CD8-positive, alpha-beta T cell (primary cell): ENCODE measurements at regions of chr22 and their contacts with region 1.

Region 1: DNA sequence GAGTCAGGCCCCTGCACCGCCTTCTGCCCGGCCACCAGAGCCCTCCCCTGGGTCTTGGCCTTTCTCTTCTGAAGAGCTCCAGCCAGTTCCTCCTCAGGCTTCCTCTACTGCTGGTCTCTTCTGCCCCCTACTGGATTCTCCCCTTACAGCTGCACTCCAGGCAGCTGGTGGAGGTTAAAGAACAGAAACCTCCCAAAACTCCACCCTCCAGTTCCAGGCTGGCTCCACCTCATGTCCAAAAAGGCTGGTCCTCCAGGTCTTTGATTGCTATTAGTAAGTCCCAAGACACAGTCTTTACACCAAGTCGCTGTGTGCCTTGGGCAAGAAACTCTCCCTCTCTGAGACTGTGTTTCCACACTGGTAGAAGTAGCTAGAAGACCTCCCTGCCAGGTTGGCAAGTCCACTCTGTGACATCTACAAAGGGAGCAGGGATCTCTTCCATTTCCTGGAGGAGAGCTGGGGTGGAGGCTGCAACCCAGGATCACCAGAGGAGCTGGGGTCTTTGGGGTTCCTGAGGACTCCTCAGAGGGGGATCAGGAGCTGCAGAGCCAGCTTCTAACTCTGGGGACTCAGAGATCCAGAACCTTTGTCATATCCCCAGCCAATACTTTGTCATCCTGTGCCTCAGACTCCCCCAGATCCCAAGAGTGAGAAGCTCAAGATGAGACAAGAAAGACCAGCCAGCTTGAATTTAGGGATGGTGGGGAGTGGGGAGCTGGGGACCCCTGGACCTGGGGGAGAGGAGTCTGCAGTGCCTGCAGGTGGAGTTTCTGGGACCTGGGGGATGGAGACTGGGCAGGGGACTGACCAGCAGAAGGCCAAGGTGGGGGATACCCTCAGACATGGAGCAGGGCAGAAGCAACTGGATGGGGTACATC is 3.4 kb upstream of the IGLL5 start:
- DNase-seq: peak; percentile 46 to 86 (median 67)
- ATAC-seq: peak; percentile 78
- H3K4me3 ChIP-seq: no peak overlapping the region
- H3K4me3 Mint-ChIP-seq: no peak overlapping the region
- H3K27ac ChIP-seq: no peak overlapping the region
- H3K27ac Mint-ChIP-seq: no peak overlapping the region
- H3K4me1 ChIP-seq: no peaks in the 10 kb centered on the region
- H3K4me1 Mint-ChIP-seq: no peaks in the 10 kb centered on the region
- H3K27me3 ChIP-seq: no peaks in the 10 kb centered on the region
- H3K27me3 Mint-ChIP-seq: no peaks in the 10 kb centered on the region
- CTCF ChIP-seq: peak; percentile 93

Region 2: GRCh38 chr22:22408731-22409696 is 475.2 kb before region 1 on chr22:
- CTCF ChIA-PET with region 1: no interaction called
- POLR2A ChIA-PET with region 1: no interaction called
- intact Hi-C with region 1: no loop called
- DNase-seq: peak in 1 of 9 experiments; percentile 9
- ATAC-seq: no peak
- H3K4me3 ChIP-seq: no peak overlapping the region
- H3K4me3 Mint-ChIP-seq: no peak overlapping the region
- H3K27ac ChIP-seq: no peak overlapping the region
- H3K27ac Mint-ChIP-seq: no peak overlapping the region
- H3K4me1 ChIP-seq: no peaks in the 10 kb centered on the region
- H3K4me1 Mint-ChIP-seq: no peaks in the 10 kb centered on the region
- H3K27me3 ChIP-seq: no peaks in the 10 kb centered on the region
- H3K27me3 Mint-ChIP-seq: peaks cover 30% of the 10 kb centered on the region
- CTCF ChIP-seq: no peak

Region 3: GRCh38 chr22:22593964-22594656 is 290.1 kb before region 1 on chr22:
- CTCF ChIA-PET with region 1: interaction called, 8 read pairs
- POLR2A ChIA-PET with region 1: no interaction called
- intact Hi-C with region 1: loop called in 1 of 2 experiments (anchors 2 kb)
- DNase-seq: peak in 8 of 9 experiments; percentile 25 to 77 (median 48)
- ATAC-seq: peak; percentile 66
- H3K4me3 ChIP-seq: no peak overlapping the region
- H3K4me3 Mint-ChIP-seq: no peak overlapping the region
- H3K27ac ChIP-seq: no peak overlapping the region
- H3K27ac Mint-ChIP-seq: no peak overlapping the region
- H3K4me1 ChIP-seq: no peaks in the 10 kb centered on the region
- H3K4me1 Mint-ChIP-seq: peaks cover 4% of the 10 kb centered on the region
- H3K27me3 ChIP-seq: no peaks in the 10 kb centered on the region
- H3K27me3 Mint-ChIP-seq: peaks cover 7% of the 10 kb centered on the region
- CTCF ChIP-seq: peak; percentile 73

Region 4: GRCh38 chr22:22692707-22693530 is 191.3 kb before region 1 on chr22:
- CTCF ChIA-PET with region 1: interaction called, 50 read pairs
- POLR2A ChIA-PET with region 1: no interaction called
- intact Hi-C with region 1: loop called (anchors 1 to 5 kb)
- DNase-seq: peak; percentile 43 to 79 (median 70)
- ATAC-seq: peak; percentile 78
- H3K4me3 ChIP-seq: no peak overlapping the region
- H3K4me3 Mint-ChIP-seq: no peak overlapping the region
- H3K27ac ChIP-seq: no peak overlapping the region
- H3K27ac Mint-ChIP-seq: no peak overlapping the region
- H3K4me1 ChIP-seq: no peaks in the 10 kb centered on the region
- H3K4me1 Mint-ChIP-seq: no peaks in the 10 kb centered on the region
- H3K27me3 ChIP-seq: no peaks in the 10 kb centered on the region
- H3K27me3 Mint-ChIP-seq: no peaks in the 10 kb centered on the region
- CTCF ChIP-seq: peak; percentile 75

Region 5: DNA sequence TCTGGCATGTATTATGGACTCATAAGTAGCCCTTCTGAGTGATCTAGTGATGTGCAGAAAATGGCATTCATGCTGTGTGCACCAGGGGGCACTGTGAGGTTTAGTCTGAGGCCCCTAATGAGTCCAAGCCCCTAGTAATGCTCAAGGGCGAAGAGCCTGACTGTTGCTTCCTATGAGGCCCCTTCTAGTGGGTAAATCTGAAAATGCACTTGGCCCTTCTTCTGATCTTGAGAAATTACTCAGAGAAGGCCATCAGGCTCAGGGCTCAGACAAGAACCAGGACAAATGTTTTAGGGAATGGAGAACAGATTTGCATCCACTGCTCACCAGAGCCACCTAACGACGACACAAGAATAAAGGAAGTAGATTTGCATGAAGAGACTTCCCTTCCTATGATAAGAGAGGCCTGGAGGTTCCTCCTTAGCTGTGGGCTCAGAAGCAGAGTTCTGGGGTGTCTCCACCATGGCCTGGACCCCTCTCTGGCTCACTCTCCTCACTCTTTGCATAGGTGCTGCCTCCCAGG is 164.0 kb before region 1 on chr22:
- CTCF ChIA-PET with region 1: interaction called, 67 read pairs
- POLR2A ChIA-PET with region 1: no interaction called
- intact Hi-C with region 1: no loop called
- DNase-seq: peak in 6 of 9 experiments; percentile 33 to 83 (median 64)
- ATAC-seq: peak; percentile 68
- H3K4me3 ChIP-seq: no peak overlapping the region
- H3K4me3 Mint-ChIP-seq: no peak overlapping the region
- H3K27ac ChIP-seq: peak overlapping the region in 1 of 2 experiments; percentile 74
- H3K27ac Mint-ChIP-seq: peak overlapping the region; percentile 81
- H3K4me1 ChIP-seq: peaks cover 25% of the 10 kb centered on the region
- H3K4me1 Mint-ChIP-seq: peaks cover 30% of the 10 kb centered on the region
- H3K27me3 ChIP-seq: no peaks in the 10 kb centered on the region
- H3K27me3 Mint-ChIP-seq: no peaks in the 10 kb centered on the region
- CTCF ChIP-seq: peak; percentile 47

Region 6: DNA sequence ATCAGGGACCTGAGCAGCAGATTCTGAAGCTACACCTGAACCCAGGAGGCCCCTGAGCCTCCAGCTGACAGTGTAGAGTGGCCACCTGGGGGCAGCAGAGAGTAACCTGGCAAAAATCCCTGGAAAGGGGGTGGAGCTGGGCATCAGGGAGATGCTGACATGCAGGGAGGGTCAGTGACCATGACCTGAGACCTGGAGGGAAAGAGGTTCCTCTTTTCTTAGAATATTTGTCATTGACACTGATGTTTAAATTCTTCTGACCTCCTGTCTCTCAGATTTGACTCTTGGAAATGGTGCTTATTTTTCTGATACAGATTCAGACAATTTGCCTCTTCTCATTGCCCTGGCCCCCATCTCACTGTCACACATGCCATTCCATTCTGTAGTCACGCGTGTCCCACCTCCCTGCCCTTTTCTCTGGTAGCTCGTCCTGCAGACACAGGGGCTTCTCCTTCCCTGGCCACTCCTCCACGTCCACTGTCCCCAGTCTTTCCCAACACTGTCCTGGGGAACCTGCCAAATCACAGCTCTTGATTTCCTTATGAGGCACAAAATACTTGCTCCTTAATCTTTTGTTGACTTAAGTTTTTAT is 113.9 kb before region 1 on chr22:
- CTCF ChIA-PET with region 1: interaction called, 38 read pairs
- POLR2A ChIA-PET with region 1: interaction called, 5 read pairs
- intact Hi-C with region 1: no loop called
- DNase-seq: peak in 6 of 9 experiments; percentile 41 to 66 (median 59)
- ATAC-seq: peak; percentile 70
- H3K4me3 ChIP-seq: no peak overlapping the region
- H3K4me3 Mint-ChIP-seq: no peak overlapping the region
- H3K27ac ChIP-seq: peak overlapping the region in 1 of 2 experiments; percentile 60
- H3K27ac Mint-ChIP-seq: peak overlapping the region; percentile 73
- H3K4me1 ChIP-seq: no peaks in the 10 kb centered on the region
- H3K4me1 Mint-ChIP-seq: peaks cover 56% of the 10 kb centered on the region
- H3K27me3 ChIP-seq: no peaks in the 10 kb centered on the region
- H3K27me3 Mint-ChIP-seq: no peaks in the 10 kb centered on the region
- CTCF ChIP-seq: peak; percentile 74

Region 7: GRCh38 chr22:22810018-22810427 is 74.2 kb before region 1 on chr22:
- CTCF ChIA-PET with region 1: interaction called, 281 read pairs
- POLR2A ChIA-PET with region 1: interaction called, 5 read pairs
- intact Hi-C with region 1: loop called in 1 of 2 experiments (anchors 2 kb)
- DNase-seq: peak; percentile 57 to 89 (median 70)
- ATAC-seq: peak; percentile 84
- H3K4me3 ChIP-seq: no peak overlapping the region
- H3K4me3 Mint-ChIP-seq: peak overlapping the region; percentile 37
- H3K27ac ChIP-seq: peak overlapping the region in 1 of 2 experiments; percentile 55
- H3K27ac Mint-ChIP-seq: peak overlapping the region; percentile 49
- H3K4me1 ChIP-seq: peaks cover 21% of the 10 kb centered on the region
- H3K4me1 Mint-ChIP-seq: peaks cover 53% of the 10 kb centered on the region
- H3K27me3 ChIP-seq: no peaks in the 10 kb centered on the region
- H3K27me3 Mint-ChIP-seq: no peaks in the 10 kb centered on the region
- CTCF ChIP-seq: peak; percentile 64

Region 8: GRCh38 chr22:22897091-22897490 is 12.8 kb after region 1 on chr22:
- CTCF ChIA-PET with region 1: interaction called, 12 read pairs
- POLR2A ChIA-PET with region 1: no interaction called
- intact Hi-C with region 1: no loop called
- DNase-seq: no peak
- ATAC-seq: no peak
- H3K4me3 ChIP-seq: no peak overlapping the region
- H3K4me3 Mint-ChIP-seq: no peak overlapping the region
- H3K27ac ChIP-seq: no peak overlapping the region
- H3K27ac Mint-ChIP-seq: no peak overlapping the region
- H3K4me1 ChIP-seq: no peaks in the 10 kb centered on the region
- H3K4me1 Mint-ChIP-seq: no peaks in the 10 kb centered on the region
- H3K27me3 ChIP-seq: no peaks in the 10 kb centered on the region
- H3K27me3 Mint-ChIP-seq: peaks cover 4% of the 10 kb centered on the region
- CTCF ChIP-seq: no peak

Region 9: GRCh38 chr22:23036684-23037428 is 152.6 kb after region 1 on chr22:
- CTCF ChIA-PET with region 1: no interaction called
- POLR2A ChIA-PET with region 1: no interaction called
- intact Hi-C with region 1: no loop called
- DNase-seq: no peak
- ATAC-seq: no peak
- H3K4me3 ChIP-seq: no peak overlapping the region
- H3K4me3 Mint-ChIP-seq: no peak overlapping the region
- H3K27ac ChIP-seq: no peak overlapping the region
- H3K27ac Mint-ChIP-seq: no peak overlapping the region
- H3K4me1 ChIP-seq: no peaks in the 10 kb centered on the region
- H3K4me1 Mint-ChIP-seq: peaks cover 11% of the 10 kb centered on the region
- H3K27me3 ChIP-seq: no peaks in the 10 kb centered on the region
- H3K27me3 Mint-ChIP-seq: peaks cover 11% of the 10 kb centered on the region
- CTCF ChIP-seq: no peak